Ascending aorta (tissue), 2 donors: ENCODE measurements at regions of chr2 and their contacts with region 1.

Region 1: DNA sequence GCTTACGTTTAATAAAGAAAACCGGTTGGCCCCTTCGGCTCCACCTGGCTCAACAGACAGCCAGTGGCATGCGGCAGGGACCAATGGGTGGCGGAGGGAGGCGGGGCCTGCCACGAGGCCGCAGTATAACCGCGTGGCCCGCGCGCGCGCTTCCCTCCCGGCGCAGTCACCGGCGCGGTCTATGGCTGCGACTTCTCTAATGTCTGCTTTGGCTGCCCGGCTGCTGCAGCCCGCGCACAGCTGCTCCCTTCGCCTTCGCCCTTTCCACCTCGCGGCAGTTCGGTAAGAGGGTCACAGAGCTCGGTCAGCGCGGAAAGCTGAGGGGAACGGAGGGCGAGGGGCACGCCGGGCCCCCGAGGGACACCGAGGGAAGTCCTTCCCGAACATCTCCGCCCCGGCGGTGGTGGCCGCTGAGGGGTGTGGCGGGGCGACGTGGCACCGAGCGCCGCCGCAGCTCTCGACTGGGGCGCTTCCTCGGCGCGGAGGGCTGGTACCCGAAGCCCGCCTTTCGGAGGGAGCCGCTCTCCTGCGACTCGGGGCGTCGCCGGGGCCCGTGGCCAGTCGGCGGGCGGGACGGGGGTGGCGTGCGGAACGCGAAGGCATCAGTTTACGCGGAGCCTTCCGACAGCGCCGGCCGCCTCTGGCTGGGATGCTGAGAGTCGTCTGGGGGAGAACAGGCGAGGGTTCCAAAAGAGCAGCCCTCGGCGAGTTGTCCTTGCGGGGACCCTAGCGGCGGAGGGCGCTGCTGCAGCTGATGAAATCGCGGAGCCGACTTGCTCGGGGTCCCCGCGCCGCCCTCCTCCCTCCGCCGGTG is at the start of gene MTHFD2:
- DNase-seq: peak; percentile 87 to 97
- H3K4me3 ChIP-seq: peak within 1 kb of the TSS; percentile 82 to 90
- H3K27ac ChIP-seq: peak within 1 kb of the TSS; percentile 97 to 98
- H3K4me1 ChIP-seq: peaks cover 15 to 23% of the 10 kb centered on the region in 2 donors
- H3K27me3 ChIP-seq: no peaks in the 10 kb centered on the region
- CTCF ChIP-seq: peak; percentile 83 to 90 (median 86)
- total RNA-seq, gene MTHFD2: 31.7 TPM

Region 2: GRCh38 chr2:73931531-73932500 is 266.9 kb before region 1 on chr2:
- intact Hi-C with region 1: loop called (anchors 5 kb)
- DNase-seq: no peak
- H3K4me3 ChIP-seq: no peak overlapping the region
- H3K27ac ChIP-seq: no peak overlapping the region
- H3K4me1 ChIP-seq: peaks cover 3 to 23% of the 10 kb centered on the region in 2 donors
- H3K27me3 ChIP-seq: no peaks in the 10 kb centered on the region
- CTCF ChIP-seq: no peak

Region 3: DNA sequence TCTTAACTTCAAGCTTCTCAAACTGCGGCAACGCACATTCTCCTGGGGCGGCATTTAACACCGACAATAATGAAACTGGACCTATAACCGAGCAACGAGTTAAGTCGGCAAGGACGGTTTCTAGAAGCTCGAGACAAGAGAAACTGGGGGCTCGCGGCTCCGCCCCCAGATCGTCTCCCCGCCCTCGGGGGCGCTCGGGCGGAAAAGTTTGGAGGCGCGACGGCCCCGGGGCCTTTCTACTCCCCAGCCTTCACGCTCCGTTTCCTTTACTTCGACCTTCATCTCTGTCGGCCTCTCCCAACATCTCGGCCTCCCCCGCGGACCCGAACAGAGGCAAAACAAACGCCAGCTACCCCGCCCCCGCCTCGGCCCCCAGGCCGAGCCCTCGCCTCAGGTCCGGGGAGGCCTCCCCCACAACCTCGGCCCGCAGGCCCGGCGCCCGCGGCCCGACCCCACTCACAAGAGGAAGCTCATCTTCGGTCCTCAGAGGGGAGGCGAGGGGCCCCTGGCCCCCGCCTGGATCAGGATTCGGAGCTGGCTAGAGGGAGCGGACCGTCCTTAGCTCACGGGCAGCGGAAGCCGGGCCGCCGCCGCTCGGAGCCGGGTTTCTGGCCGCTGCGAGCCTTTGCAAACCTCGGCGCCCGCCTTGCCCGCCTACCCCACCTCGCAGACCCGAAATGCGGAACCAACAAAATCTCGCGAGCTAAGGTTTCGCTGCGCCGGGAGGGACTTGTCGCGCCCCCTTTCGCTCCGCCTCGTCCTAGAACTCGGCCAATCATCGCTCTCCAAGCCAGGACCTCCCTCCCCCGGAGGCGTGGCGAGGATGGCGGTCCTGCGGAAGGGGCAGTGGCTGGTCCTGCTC is 20.2 kb before region 1 on chr2 and contains the start of gene MOB1A:
- intact Hi-C with region 1: loop called (anchors 1 kb)
- DNase-seq: peak; percentile 91 to 99
- H3K4me3 ChIP-seq: peak within 1 kb of the TSS; percentile 76 to 100
- H3K27ac ChIP-seq: peak within 1 kb of the TSS; percentile 88 to 98
- H3K4me1 ChIP-seq: peaks cover 0 to 26% of the 10 kb centered on the region in 2 donors
- H3K27me3 ChIP-seq: no peaks in the 10 kb centered on the region
- CTCF ChIP-seq: no peak
- total RNA-seq, gene MOB1A: 56.8 TPM